CD4-positive, alpha-beta memory T cell (primary cell): ENCODE measurements at regions of chr3 and their contacts with region 1.

Region 1: GRCh38 chr3:170128977-170129431 is 52.5 kb downstream of the PHC3 start:
- DNase-seq: no peak
- H3K4me3 ChIP-seq: no peak overlapping the region
- H3K4me3 Mint-ChIP-seq: peak overlapping the region in 6 of 8 donors; percentile 36 to 71 (median 63)
- H3K27ac ChIP-seq: no peak overlapping the region
- H3K27ac Mint-ChIP-seq: peak overlapping the region; percentile 20 to 90 (median 75)
- H3K4me1 ChIP-seq: peaks cover 23% of the 10 kb centered on the region
- H3K4me1 Mint-ChIP-seq: peaks cover 19 to 25% (median 22%) of the 10 kb centered on the region in 4 donors
- H3K27me3 ChIP-seq: no peaks in the 10 kb centered on the region
- H3K27me3 Mint-ChIP-seq: no peaks in the 10 kb centered on the region

Region 2: GRCh38 chr3:169479314-169479939 is 649.6 kb before region 1 on chr3:
- CTCF ChIA-PET with region 1: no interaction called
- POLR2A ChIA-PET with region 1: no interaction called
- intact Hi-C with region 1: no loop called
- DNase-seq: no peak
- H3K4me3 ChIP-seq: no peak overlapping the region
- H3K4me3 Mint-ChIP-seq: no peak overlapping the region
- H3K27ac ChIP-seq: no peak overlapping the region
- H3K27ac Mint-ChIP-seq: peak overlapping the region in 1 of 7 donors; percentile 22
- H3K4me1 ChIP-seq: no peaks in the 10 kb centered on the region
- H3K4me1 Mint-ChIP-seq: no peaks in the 10 kb centered on the region
- H3K27me3 ChIP-seq: no peaks in the 10 kb centered on the region
- H3K27me3 Mint-ChIP-seq: peaks cover 0 to 2% of the 10 kb centered on the region in 2 donors

Region 3: GRCh38 chr3:170109579-170110570 is 19.1 kb before region 1 on chr3:
- CTCF ChIA-PET with region 1: no interaction called
- POLR2A ChIA-PET with region 1: no interaction called
- intact Hi-C with region 1: loop called (anchors 2 kb)
- DNase-seq: no peak
- H3K4me3 ChIP-seq: no peak overlapping the region
- H3K4me3 Mint-ChIP-seq: peak overlapping the region in 5 of 8 donors; percentile 0 to 55 (median 1)
- H3K27ac ChIP-seq: no peak overlapping the region
- H3K27ac Mint-ChIP-seq: peak overlapping the region; percentile 23 to 79 (median 37)
- H3K4me1 ChIP-seq: peaks cover 21% of the 10 kb centered on the region
- H3K4me1 Mint-ChIP-seq: peaks cover 17 to 28% (median 23%) of the 10 kb centered on the region in 4 donors
- H3K27me3 ChIP-seq: no peaks in the 10 kb centered on the region
- H3K27me3 Mint-ChIP-seq: no peaks in the 10 kb centered on the region

Region 4: DNA sequence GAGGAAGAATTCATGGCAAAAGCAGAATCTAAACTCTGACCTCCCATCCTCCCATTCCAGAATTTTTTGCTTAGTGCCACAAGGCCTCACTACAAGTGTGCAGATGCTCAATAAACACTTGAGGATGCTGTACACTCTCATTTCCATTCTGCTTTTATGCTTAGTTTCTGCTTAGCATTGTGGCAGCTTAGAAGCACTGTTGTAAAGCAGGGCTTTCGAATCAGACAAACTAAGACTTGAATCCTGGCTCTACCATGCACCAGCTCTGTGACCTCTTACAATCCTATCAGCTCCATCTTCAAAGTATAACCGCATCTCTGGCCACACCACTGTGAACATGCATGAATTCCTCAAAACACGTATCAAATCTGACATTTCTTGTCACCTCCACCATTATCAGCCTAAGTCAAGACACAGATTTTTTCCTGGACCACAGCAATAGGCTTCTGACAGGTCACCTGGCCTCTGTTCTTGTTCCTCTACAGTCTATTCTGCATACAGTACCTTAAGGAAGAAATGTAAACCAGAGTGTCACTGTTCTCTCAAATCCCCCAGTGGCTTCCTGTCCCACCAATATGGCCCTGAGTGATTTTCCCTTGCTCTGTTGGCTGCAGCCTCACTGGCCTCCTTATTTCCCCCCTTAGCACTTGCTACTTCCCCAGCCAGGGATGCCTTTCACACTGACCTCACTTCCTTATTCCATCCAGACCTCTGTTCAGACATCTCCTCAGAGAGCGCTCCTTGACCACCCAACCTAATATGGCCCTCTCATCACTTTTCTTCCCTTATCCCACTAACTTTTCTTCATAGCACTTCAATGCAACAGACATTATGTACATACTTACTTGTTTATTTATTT is 60.6 kb after region 1 on chr3:
- CTCF ChIA-PET with region 1: no interaction called
- POLR2A ChIA-PET with region 1: no interaction called
- intact Hi-C with region 1: no loop called
- DNase-seq: no peak
- H3K4me3 ChIP-seq: no peak overlapping the region
- H3K4me3 Mint-ChIP-seq: peak overlapping the region in 3 of 8 donors; percentile 21 to 49 (median 22)
- H3K27ac ChIP-seq: no peak overlapping the region
- H3K27ac Mint-ChIP-seq: no peak overlapping the region
- H3K4me1 ChIP-seq: no peaks in the 10 kb centered on the region
- H3K4me1 Mint-ChIP-seq: peaks cover 8 to 11% (median 9%) of the 10 kb centered on the region in 4 donors
- H3K27me3 ChIP-seq: no peaks in the 10 kb centered on the region
- H3K27me3 Mint-ChIP-seq: peaks cover 0 to 1% of the 10 kb centered on the region in 2 donors